A549 (cell line): ENCODE measurements at regions of chr12 and their contacts with region 1.

Region 1: GRCh38 chr12:13362260-13362841 is 165.8 kb downstream of the EMP1 start:
- DNase-seq: peak; percentile 60 to 81
- ATAC-seq: peak; percentile 94 to 100
- H3K4me3 ChIP-seq: no peak overlapping the region
- H3K27ac ChIP-seq: no peak overlapping the region
- H3K4me1 ChIP-seq: no peaks in the 10 kb centered on the region
- CTCF ChIP-seq: peak; percentile 72
- EP300 ChIP-seq: no peak
- POLR2A ChIP-seq: no peak
- RAD21 ChIP-seq: peak; percentile 77 to 85

Region 2: DNA sequence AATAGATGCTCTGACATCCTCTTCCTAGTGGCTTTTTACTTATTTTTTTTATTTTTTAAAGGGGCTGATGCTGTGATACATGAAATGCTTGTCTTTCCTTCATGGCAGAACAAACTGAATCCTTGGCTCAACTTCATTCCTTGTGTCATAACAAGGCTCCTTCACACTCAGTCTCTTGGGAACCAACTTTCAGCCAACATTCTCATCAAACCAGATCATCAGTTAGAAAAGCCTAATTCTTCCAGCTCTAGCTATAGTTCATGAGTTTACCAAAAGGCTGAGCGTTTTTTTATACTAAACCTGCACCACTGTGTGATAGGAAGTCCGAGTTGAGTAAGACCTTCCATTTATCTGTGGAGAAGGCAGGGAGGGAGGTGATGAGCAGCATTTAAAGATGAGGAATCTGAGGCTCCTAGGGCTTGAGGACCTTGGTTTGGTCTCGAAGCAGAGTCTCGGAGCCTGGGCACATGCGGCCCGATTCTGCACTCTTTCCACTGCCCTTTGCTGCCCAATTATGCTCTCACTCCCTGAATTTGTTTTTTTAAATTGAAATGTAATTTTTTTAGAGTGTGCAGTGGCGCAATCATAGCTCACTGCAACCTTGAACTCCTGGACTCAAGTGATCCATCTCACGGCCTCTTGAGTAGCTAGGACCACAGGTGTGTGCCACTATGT is 418.6 kb before region 1 on chr12:
- CTCF ChIA-PET with region 1: no interaction called
- POLR2A ChIA-PET with region 1: no interaction called
- DNase-seq: no peak
- ATAC-seq: no peak
- H3K4me3 ChIP-seq: no peak overlapping the region
- H3K27ac ChIP-seq: no peak overlapping the region
- H3K4me1 ChIP-seq: peaks cover 6% of the 10 kb centered on the region; the same call in 1 of the 3 replicates
- CTCF ChIP-seq: no peak
- EP300 ChIP-seq: no peak
- POLR2A ChIP-seq: no peak
- RAD21 ChIP-seq: no peak

Region 3: GRCh38 chr12:13347241-13348043 is 14.9 kb before region 1 on chr12:
- CTCF ChIA-PET with region 1: interaction called, 15 read pairs
- POLR2A ChIA-PET with region 1: interaction called, 3 read pairs
- DNase-seq: peak; percentile 36 to 69
- ATAC-seq: peak; percentile 85 to 93
- H3K4me3 ChIP-seq: no peak overlapping the region
- H3K27ac ChIP-seq: peak overlapping the region; percentile 72 to 82
- H3K4me1 ChIP-seq: peaks cover 35% of the 10 kb centered on the region
- CTCF ChIP-seq: peak; percentile 30; the same call in 2 of the 3 replicates
- EP300 ChIP-seq: peak in 1 of 2 experiments; percentile 18; a peak in 1 of 5 replicates
- POLR2A ChIP-seq: no peak
- RAD21 ChIP-seq: 0 out of 5 replicates have a peak, but pooled peaks of 1 of the 2 experiments have one; percentile 18

Region 4: DNA sequence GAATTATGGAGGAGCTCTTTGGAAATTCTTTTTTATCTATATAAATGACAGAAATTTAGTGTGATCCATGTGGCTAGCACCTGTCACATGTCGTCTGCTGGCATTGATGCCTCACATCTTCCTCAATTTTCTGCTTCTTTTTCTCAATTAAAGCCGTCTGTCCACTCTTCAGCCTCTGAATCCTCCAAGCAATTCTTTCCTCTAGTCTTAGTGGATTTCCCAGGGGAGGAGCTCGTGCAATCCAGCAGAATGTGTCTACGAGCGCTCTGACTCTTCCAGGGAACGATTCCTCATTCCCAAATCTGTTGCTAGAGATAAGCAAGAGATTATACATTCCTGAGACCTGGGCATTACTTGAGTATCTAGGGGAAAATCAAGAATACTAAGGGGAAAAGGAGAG is 10.8 kb after region 1 on chr12:
- CTCF ChIA-PET with region 1: interaction called, 16 read pairs
- POLR2A ChIA-PET with region 1: no interaction called
- DNase-seq: no peak
- ATAC-seq: no peak
- H3K4me3 ChIP-seq: no peak overlapping the region
- H3K27ac ChIP-seq: no peak overlapping the region
- H3K4me1 ChIP-seq: peaks cover 24% of the 10 kb centered on the region
- CTCF ChIP-seq: no peak
- EP300 ChIP-seq: no peak
- POLR2A ChIP-seq: no peak
- RAD21 ChIP-seq: no peak

Region 5: GRCh38 chr12:13379531-13380188 is 17.3 kb after region 1 on chr12:
- CTCF ChIA-PET with region 1: interaction called, 13 read pairs
- POLR2A ChIA-PET with region 1: no interaction called
- DNase-seq: no peak
- ATAC-seq: no peak
- H3K4me3 ChIP-seq: no peak overlapping the region
- H3K27ac ChIP-seq: no peak overlapping the region
- H3K4me1 ChIP-seq: peaks cover 24% of the 10 kb centered on the region
- CTCF ChIP-seq: no peak
- EP300 ChIP-seq: no peak
- POLR2A ChIP-seq: no peak
- RAD21 ChIP-seq: no peak